ENCODE measurements at regions of chr1 and their contacts with region 1.

Region 1: GRCh38 chr1:218705911-218706893 is 361.1 kb downstream of the TGFB2 start:
- DNase-seq: peak; percentile 100
- ATAC-seq: peak; percentile 85
- H3K4me3 ChIP-seq: no peak overlapping the region
- H3K27ac ChIP-seq: peak overlapping the region; percentile 88
- H3K4me1 ChIP-seq: peaks cover 42% of the 10 kb centered on the region
- H3K27me3 ChIP-seq: no peaks in the 10 kb centered on the region
- CTCF ChIP-seq: no peak

Region 2: DNA sequence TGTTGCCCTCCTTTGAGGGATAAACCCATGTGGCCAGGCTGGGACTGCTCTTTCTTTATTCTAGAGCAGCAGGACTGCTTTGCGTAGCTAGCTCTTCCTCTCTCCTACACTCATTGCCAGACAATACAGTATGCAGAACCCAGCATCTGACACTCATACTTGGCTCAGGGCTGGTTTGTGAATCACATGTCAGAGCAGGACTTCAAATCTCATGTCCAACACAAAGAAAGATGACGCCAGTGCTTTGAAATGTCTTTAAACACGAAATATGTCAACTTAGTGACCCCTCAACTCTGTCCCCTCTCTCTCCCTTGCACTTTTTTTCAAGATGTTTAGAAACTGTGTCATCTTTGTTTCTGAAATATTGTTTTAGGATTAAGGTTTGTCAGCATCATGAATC is 226.1 kb before region 1 on chr1:
- CTCF ChIA-PET with region 1: no interaction called
- POLR2A ChIA-PET with region 1: no interaction called
- intact Hi-C with region 1: loop called (anchors 1 kb)
- DNase-seq: peak; percentile 83
- ATAC-seq: no peak
- H3K4me3 ChIP-seq: no peak overlapping the region
- H3K27ac ChIP-seq: peak overlapping the region; percentile 74
- H3K4me1 ChIP-seq: peaks cover 57% of the 10 kb centered on the region
- H3K27me3 ChIP-seq: no peaks in the 10 kb centered on the region
- CTCF ChIP-seq: no peak

Region 3: GRCh38 chr1:218585511-218586184 is 120.6 kb before region 1 on chr1:
- CTCF ChIA-PET with region 1: no interaction called
- POLR2A ChIA-PET with region 1: no interaction called
- intact Hi-C with region 1: loop called (anchors 2 kb)
- DNase-seq: peak; percentile 99
- ATAC-seq: peak; percentile 87
- H3K4me3 ChIP-seq: peak overlapping the region; percentile 28; the same call in 1 of the 2 replicates
- H3K27ac ChIP-seq: peak overlapping the region; percentile 92
- H3K4me1 ChIP-seq: peaks cover 34% of the 10 kb centered on the region
- H3K27me3 ChIP-seq: no peaks in the 10 kb centered on the region
- CTCF ChIP-seq: no peak

Region 4: DNA sequence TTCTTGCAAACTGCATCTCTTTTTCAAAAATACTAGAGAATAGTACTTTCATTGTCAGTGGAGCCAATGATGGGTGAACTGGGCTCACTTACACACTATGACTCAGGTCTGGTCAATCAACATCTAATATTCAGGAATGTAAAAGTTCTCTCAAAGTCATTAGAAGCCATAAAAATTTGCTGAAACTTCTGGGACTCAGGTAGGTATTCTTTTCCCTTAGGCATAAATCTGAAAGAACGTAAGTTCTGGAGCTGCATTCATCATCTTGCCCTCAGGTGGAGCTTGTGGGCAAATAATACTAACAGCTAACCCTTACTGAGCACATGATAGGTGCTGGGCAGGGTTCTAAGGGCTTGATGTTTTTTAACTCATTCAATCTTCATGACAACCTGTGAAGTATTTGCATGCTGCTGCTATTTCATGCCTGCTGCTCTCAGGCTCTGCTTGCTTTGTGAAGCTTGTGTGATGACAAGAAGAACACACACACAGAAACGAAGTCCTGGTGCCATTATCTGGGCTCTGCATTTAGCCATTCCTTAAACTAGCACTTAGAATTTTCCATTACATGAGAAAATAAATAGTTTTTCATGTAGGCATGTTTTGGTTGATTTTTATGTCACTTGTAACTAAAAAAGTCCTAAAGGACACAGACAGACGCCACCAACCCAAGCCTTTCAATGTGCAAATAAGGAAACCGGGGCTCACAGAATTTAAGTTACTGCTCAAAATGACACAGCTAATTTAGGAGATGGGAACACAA is 73.3 kb after region 1 on chr1:
- CTCF ChIA-PET with region 1: interaction called, 3 read pairs
- POLR2A ChIA-PET with region 1: no interaction called
- intact Hi-C with region 1: loop called (anchors 1 kb)
- DNase-seq: peak; percentile 99
- ATAC-seq: peak; percentile 94
- H3K4me3 ChIP-seq: no peak overlapping the region
- H3K27ac ChIP-seq: peak overlapping the region; percentile 78
- H3K4me1 ChIP-seq: peaks cover 27% of the 10 kb centered on the region
- H3K27me3 ChIP-seq: no peaks in the 10 kb centered on the region
- CTCF ChIP-seq: peak; percentile 53

Region 5: GRCh38 chr1:218890451-218890850 is 184.2 kb after region 1 on chr1:
- CTCF ChIA-PET with region 1: no interaction called
- POLR2A ChIA-PET with region 1: no interaction called
- intact Hi-C with region 1: loop called (anchors 1 kb)
- DNase-seq: no peak
- ATAC-seq: no peak
- H3K4me3 ChIP-seq: no peak overlapping the region
- H3K27ac ChIP-seq: no peak overlapping the region
- H3K4me1 ChIP-seq: peaks cover 54% of the 10 kb centered on the region
- H3K27me3 ChIP-seq: no peaks in the 10 kb centered on the region
- CTCF ChIP-seq: no peak

Region 6: GRCh38 chr1:218945050-218945449 is 238.8 kb after region 1 on chr1:
- CTCF ChIA-PET with region 1: no interaction called
- POLR2A ChIA-PET with region 1: no interaction called
- intact Hi-C with region 1: loop called (anchors 1 kb)
- DNase-seq: peak; percentile 93
- ATAC-seq: peak; percentile 77
- H3K4me3 ChIP-seq: no peak overlapping the region
- H3K27ac ChIP-seq: peak overlapping the region; percentile 62
- H3K4me1 ChIP-seq: peaks cover 25% of the 10 kb centered on the region
- H3K27me3 ChIP-seq: no peaks in the 10 kb centered on the region
- CTCF ChIP-seq: no peak

Region 7: GRCh38 chr1:219324629-219325367 is 618.6 kb after region 1 on chr1:
- CTCF ChIA-PET with region 1: no interaction called
- POLR2A ChIA-PET with region 1: no interaction called
- intact Hi-C with region 1: loop called (anchors 10 kb)
- DNase-seq: peak; percentile 100
- ATAC-seq: peak; percentile 90
- H3K4me3 ChIP-seq: peak overlapping the region; percentile 44
- H3K27ac ChIP-seq: peak overlapping the region; percentile 90
- H3K4me1 ChIP-seq: peaks cover 40% of the 10 kb centered on the region
- H3K27me3 ChIP-seq: no peaks in the 10 kb centered on the region
- CTCF ChIP-seq: no peak